ENCODE measurements at regions of chr4 and their contacts with region 1.

Region 1: GRCh38 chr4:136471051-136471450 is 1061.2 kb downstream of the PCDH18 start:
- DNase-seq: no peak
- ATAC-seq: no peak
- H3K4me3 ChIP-seq: no peak overlapping the region
- H3K27ac ChIP-seq: no peak overlapping the region
- H3K4me1 ChIP-seq: no peaks in the 10 kb centered on the region
- H3K27me3 ChIP-seq: no peaks in the 10 kb centered on the region
- CTCF ChIP-seq: no peak

Region 2: DNA sequence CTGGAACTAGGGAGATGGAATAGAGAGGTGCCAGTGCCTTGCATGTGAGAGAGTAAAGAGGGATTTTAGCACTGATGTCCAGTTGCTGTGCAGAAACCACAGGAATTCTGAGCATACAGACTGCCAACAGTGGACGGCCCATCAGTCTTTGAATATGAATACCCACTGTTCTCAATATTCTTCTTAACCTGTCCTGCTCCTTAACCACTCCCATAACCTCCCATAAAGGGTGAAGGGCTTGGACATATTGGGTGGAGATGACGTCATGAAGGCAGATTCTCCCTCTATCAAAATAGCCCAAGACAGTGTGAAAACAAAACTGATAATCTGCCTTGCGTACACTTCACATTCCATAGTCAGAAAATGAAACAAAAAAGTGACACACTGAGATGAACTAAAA is 955.8 kb before region 1 on chr4:
- intact Hi-C with region 1: loop called in 1 of 10 experiments (anchors 5 kb)
- DNase-seq: no peak
- ATAC-seq: no peak
- H3K4me3 ChIP-seq: no peak overlapping the region
- H3K27ac ChIP-seq: no peak overlapping the region
- H3K4me1 ChIP-seq: no peaks in the 10 kb centered on the region
- H3K27me3 ChIP-seq: no peaks in the 10 kb centered on the region
- CTCF ChIP-seq: no peak